PC-9 (cell line): ENCODE measurements at regions of chr14 and their contacts with region 1.

Region 1: DNA sequence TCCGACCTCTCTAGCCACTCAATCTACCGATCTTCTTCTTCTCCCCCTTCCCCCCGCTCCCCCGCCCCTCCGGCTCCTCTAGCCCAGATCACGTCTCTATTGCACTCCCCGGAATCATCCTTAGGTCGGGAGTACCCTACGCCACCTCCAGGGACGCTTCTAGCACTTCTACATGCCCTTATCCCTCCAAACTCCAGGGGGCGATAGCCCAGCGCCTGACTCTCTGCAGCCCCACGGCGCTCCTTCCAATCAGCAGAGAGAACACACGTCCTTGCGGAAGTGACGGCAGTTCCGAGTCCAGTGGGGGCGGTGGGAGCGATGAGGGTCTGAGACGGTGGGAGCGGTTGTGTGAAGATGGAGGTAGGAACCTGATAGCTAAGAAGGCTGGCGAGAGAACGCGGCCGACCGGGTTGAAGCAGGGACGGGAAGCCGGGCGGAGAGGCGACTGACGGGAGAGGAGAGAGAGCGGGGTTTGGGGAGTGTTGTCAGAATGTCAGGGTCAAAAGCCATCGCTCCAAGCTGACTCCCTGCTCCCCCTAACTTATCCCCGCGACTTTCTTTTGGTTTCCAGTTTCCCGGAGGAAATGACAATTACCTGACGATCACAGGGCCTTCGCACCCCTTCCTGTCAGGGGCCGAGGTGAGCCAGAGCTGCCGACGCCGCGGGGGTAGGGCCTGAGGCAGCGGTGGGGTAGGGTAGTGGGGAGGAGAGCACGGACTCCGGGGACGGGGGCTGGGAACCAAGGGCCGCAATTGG is at the starts of genes RAB2B and TOX4:
- DNase-seq: peak; percentile 91 to 92
- H3K4me3 ChIP-seq: peak within 1 kb of the TSS; percentile 92
- H3K27ac ChIP-seq: peak within 1 kb of the TSS; percentile 80
- H3K4me1 ChIP-seq: peaks cover 16% of the 10 kb centered on the region
- H3K27me3 ChIP-seq: no peaks in the 10 kb centered on the region
- CTCF ChIP-seq: peak; percentile 77
- total RNA-seq, gene RAB2B: 12.2 and 12.8 TPM in 2 replicates
- total RNA-seq, gene TOX4: 32.9 and 50.6 TPM in 2 replicates

Region 2: DNA sequence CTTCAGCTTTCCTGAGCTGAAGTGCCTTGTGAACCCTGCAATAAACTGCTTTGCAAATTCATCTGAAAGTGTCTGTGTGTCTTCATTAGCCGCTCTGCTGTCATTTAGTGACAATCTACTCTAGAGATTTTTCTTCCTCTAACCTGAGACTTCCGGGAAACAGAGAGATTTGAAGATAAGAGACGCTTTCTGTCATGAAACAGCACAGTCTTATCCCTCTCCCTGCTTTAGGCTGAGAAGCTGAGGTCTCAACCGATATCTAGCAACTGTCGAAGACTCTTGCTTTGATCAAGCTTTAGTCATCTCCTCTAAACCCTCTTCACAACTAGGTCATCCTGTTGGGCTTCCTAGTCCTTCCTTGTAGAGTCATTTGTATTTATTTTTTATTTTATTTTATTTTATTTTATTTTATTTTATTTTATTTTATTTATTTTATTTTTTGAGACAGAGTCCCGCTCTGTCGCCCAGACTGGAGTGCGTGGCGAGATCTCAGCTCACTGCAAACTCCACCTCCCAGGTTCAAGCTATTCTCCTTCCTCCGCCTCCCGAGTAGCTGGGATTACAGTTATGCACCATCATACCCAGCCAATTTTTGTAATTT is 520.6 kb before region 1 on chr14:
- CTCF ChIA-PET with region 1: interaction called, 16 read pairs
- POLR2A ChIA-PET with region 1: no interaction called
- intact Hi-C with region 1: no loop called
- DNase-seq: no peak
- H3K4me3 ChIP-seq: no peak overlapping the region
- H3K27ac ChIP-seq: no peak overlapping the region
- H3K4me1 ChIP-seq: no peaks in the 10 kb centered on the region
- H3K27me3 ChIP-seq: no peaks in the 10 kb centered on the region; the same call in 1 of the 2 replicates
- CTCF ChIP-seq: no peak

Region 3: GRCh38 chr14:21287168-21287567 is 189.9 kb before region 1 on chr14:
- CTCF ChIA-PET with region 1: no interaction called
- POLR2A ChIA-PET with region 1: no interaction called
- intact Hi-C with region 1: no loop called
- DNase-seq: no peak
- H3K4me3 ChIP-seq: no peak overlapping the region
- H3K27ac ChIP-seq: no peak overlapping the region
- H3K4me1 ChIP-seq: no peaks in the 10 kb centered on the region
- H3K27me3 ChIP-seq: no peaks in the 10 kb centered on the region
- CTCF ChIP-seq: no peak

Region 4: GRCh38 chr14:21437063-21437901 is 39.8 kb before region 1 on chr14:
- CTCF ChIA-PET with region 1: no interaction called
- POLR2A ChIA-PET with region 1: no interaction called
- intact Hi-C with region 1: loop called (anchors 2 kb)
- DNase-seq: peak; percentile 92 to 94
- H3K4me3 ChIP-seq: peak overlapping the region; percentile 71
- H3K27ac ChIP-seq: peak overlapping the region; percentile 79
- H3K4me1 ChIP-seq: peaks cover 19% of the 10 kb centered on the region
- H3K27me3 ChIP-seq: no peaks in the 10 kb centered on the region
- CTCF ChIP-seq: no peak

Region 5: DNA sequence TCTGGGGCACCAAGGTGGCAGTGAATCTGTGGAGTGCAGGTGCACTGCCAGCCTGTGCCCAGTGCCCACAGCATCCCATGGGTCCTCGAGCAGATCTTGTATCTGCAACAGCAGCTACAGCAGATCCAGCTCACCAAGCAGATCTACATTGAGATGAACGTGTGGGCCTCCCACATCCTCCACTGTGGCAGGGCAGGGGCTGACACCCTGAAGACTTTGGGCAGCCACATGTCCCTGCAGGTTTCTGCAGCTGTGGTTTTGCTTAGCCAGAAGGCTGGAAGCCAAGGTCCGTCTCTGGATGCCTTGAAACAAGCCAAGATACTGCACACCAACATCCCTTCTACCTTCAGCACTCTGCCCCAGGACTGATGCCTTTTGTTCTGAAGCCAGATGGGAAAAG is 535.3 kb after region 1 on chr14:
- CTCF ChIA-PET with region 1: no interaction called
- POLR2A ChIA-PET with region 1: no interaction called
- intact Hi-C with region 1: no loop called
- DNase-seq: no peak
- H3K4me3 ChIP-seq: no peak overlapping the region
- H3K27ac ChIP-seq: no peak overlapping the region
- H3K4me1 ChIP-seq: no peaks in the 10 kb centered on the region
- H3K27me3 ChIP-seq: no peaks in the 10 kb centered on the region
- CTCF ChIP-seq: no peak